ENCODE measurements at regions of chr20 and their contacts with region 1.

Region 1: DNA sequence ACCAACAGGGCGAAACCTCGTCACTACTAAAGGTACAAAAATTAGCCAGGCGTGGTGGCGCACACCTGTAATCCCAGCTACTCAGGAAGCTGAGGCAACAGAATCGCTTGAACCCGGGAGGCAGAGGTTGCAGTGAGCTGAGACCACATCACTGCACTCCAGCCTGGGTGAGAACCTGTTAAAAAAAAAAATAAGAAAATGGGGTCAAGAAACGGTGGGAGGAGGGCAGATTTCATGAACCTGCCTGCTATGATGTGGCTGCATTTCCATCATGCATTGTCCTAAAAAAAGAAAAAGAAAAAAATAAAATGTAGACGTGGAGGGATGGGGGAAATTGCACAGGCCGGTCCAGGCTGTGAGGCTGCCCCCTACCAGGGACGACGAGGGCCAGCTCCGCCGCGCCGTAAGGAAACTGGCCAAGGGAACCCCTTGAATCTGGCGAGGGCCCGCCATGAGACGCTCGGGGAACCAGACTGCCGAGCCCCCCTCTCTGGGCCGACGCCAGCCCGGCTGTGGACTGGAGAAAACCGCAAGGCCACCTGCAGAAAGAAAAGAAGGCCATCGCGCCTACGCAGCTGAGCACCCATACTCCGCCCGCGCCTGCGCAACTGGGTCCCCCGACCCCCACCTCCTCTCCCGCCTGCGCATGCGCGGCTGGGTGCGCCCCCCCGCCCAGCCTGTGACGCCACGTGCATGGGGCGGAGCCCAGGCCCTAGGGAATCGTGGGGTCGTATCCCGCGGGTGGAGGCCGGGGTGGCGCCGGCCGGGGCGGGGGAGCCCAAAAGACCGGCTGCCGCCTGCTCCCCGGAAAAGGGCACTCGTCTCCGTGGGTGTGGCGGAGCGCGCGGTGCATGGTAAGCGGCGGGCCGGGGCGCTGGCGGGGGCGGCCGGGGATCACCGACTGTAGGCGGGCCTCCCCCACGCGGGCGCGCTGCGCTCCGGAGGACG is at the start of gene ENTPD6:
- DNase-seq: peak; percentile 84 to 98
- H3K4me3 ChIP-seq: peak within 1 kb of the TSS; percentile 82
- CTCF ChIP-seq: peak in 1 of 3 donors; percentile 6
- POLR2A ChIP-seq: peak in 1 of 2 donors; percentile 56
- total RNA-seq, gene ENTPD6: 37.5 to 59.7 (median 43.0) TPM

Region 2: GRCh38 chr20:25081065-25081729 is 114.1 kb before region 1 on chr20:
- intact Hi-C with region 1: loop called (anchors 10 kb)
- DNase-seq: peak in 1 of 2 donors; percentile 80
- H3K4me3 ChIP-seq: no peak overlapping the region
- CTCF ChIP-seq: no peak
- POLR2A ChIP-seq: no peak

Region 3: DNA sequence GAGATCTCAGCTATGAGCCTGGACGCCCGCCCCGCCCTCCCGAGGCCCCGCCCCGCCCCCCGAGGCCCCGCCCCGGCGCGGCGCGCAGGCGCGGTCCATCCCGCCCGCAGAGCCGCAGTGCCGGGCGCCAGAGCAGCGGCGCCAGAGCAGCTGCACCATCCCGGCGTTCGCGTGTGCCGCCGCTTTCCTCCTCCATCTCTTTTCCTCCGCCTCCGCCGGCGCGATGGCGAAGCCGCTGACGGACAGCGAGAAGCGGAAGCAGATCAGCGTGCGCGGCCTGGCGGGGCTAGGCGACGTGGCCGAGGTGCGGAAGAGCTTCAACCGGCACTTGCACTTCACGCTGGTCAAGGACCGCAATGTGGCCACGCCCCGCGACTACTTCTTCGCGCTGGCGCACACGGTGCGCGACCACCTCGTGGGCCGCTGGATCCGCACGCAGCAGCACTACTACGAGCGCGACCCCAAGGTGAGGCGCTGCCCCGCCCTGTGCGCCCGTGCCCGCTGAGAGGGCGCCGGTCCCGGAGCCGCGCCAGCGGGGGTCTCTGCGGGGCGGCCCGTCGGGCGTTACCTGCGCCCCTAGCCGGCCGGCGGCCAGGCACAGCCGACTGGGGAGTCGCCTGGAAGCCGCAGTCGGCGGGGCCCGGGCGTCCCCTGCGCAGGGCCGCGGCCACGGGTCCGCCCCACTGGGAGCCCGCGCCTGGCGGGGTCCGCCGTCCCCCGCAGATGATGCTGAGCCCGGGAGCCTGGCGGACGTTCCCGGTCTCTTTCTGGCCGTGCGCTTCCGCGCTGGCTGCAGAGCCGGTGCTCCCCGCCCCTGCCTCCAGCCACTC is 52.9 kb after region 1 on chr20 and contains the start of gene PYGB:
- intact Hi-C with region 1: loop called (anchors 10 kb)
- DNase-seq: peak in 1 of 2 donors; percentile 95
- H3K4me3 ChIP-seq: peak within 1 kb of the TSS; percentile 96
- CTCF ChIP-seq: no peak
- POLR2A ChIP-seq: no peak
- total RNA-seq, gene PYGB: 99.0 to 308 (median 194) TPM